ENCODE measurements at regions of chr2 and their contacts with region 1.

Region 1: DNA sequence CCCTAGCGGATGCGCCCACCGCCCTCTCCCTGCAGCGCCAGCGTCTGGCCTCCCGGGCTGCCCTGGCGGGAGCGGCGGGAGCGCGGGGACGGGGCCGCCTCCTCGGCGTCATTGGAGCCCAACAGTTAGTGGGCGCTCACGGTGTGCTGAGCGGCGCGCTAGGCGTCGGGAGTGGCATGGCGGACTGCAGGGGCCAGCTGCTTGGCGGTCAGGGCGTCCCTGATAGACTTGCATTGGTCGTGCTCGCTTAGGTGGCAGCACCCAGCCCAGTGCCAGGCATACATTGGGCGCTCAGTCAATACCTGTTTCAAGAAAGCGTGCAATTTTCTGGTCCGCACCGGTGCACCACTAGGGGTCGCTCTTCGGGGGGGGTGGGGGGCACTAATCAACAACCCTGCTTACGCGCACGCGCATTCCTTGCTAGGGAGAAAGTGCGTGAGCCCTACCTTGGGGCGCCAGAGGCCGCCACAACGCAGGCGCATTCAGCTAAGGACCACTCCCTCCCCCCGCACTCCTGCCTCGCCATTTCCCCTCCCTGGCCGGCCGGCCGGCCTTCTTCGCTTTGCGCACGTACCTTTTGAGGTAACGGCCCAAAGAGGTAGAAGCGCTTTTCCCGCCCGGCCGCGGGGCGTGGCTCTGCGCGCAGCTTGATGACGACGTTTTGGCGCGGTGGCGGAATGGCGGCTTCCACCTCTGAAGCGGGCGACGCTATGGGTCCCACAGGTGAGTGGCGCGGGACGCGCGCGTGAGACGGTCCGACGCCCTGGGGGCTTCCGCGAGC is 411 bp upstream of the MZT2A start:
- DNase-seq: peak in 1 of 2 donors; percentile 95
- H3K4me3 ChIP-seq: peak overlapping the region; percentile 73 to 83
- H3K27ac ChIP-seq: peak overlapping the region; percentile 90
- H3K4me1 ChIP-seq: peaks cover 38% of the 10 kb centered on the region
- H3K27me3 ChIP-seq: no peaks in the 10 kb centered on the region
- CTCF ChIP-seq: peak; percentile 35 to 95 (median 78)
- POLR2A ChIP-seq: no peak

Region 2: DNA sequence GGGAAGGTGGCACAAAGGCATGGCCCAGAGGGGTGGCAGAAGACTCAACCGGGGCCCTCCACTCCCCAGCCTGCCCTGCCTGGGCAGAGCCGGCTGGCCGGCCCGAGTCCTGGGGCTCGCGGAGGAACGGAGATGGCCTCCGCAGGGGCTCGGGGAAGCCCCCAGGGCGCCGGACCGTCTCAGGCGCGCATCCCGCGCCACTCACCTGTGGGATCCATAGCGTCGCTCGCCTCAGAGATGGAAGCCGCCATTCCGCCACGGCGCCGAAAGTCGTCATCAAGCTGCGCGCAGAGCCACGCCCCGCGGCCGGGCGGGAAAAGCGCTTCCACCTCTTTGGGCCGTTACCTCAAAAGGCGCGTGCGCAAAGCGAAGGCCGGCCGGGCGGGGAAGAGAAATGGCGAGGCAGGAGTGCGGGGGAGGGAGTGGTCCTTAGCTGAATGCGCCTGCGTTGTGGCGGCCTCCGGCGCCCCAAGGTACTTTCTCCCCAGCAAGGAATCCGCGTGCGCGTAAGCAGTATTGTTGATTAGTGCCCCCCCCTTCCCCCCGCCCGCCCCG is 1311.2 kb before region 1 on chr2 and contains the start of gene SMPD4:
- intact Hi-C with region 1: loop called (anchors 5 kb)
- DNase-seq: peak in 1 of 2 donors; percentile 96
- H3K4me3 ChIP-seq: peak within 1 kb of the TSS; percentile 88 to 98
- H3K27ac ChIP-seq: peak within 1 kb of the TSS; percentile 86
- H3K4me1 ChIP-seq: peaks cover 35% of the 10 kb centered on the region
- H3K27me3 ChIP-seq: no peaks in the 10 kb centered on the region
- CTCF ChIP-seq: no peak
- POLR2A ChIP-seq: peak in 1 of 2 donors; percentile 8
- total RNA-seq, gene SMPD4: 45.2 TPM

Region 3: DNA sequence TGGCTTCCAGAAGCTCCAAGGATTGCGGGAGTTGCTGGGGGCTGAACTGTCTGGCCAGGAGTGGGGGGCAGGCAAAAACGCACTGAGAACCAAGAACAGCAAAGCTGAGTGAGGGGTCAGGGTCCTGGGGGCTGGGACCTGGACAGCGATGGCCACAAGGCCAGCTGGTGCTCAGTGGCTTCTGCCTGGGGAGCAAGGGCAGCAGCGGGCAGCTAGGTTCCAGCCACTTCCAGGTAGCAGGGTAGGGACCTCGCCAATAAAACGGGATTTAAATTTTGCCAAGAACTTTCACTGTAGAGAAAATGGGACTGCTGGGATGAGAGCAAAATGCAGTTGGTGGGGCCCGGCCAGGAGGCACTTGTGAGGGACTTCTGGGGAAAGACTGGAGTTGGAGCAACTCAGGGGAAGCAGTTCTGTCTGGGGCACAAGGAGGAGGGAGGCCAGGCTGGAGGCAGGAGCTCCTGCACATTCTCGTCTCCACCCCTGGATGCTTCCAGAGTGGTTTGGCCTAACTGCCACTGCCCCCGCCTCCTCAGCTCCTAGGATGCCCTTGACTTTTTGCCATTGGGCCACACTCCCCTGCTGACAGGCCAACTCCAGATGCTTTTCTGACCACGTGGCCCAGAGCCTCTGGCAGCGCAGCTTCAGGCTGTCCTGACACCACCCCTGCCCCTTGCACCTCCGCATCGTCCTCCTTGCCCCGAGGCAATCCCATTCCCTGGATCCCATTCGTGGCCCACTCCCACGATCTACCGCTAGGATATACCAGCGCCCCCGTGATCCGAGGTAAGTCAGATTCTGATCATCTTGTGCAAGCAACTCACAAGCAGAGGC is 29.6 kb after region 1 on chr2:
- intact Hi-C with region 1: loop called (anchors 1 kb)
- DNase-seq: no peak
- H3K4me3 ChIP-seq: no peak overlapping the region
- H3K27ac ChIP-seq: no peak overlapping the region
- H3K4me1 ChIP-seq: no peaks in the 10 kb centered on the region
- H3K27me3 ChIP-seq: no peaks in the 10 kb centered on the region
- CTCF ChIP-seq: no peak
- POLR2A ChIP-seq: no peak

Region 4: GRCh38 chr2:131635611-131636010 is 143.0 kb after region 1 on chr2:
- intact Hi-C with region 1: no loop called
- DNase-seq: no peak
- H3K4me3 ChIP-seq: no peak overlapping the region
- H3K27ac ChIP-seq: no peak overlapping the region
- H3K4me1 ChIP-seq: no peaks in the 10 kb centered on the region
- H3K27me3 ChIP-seq: no peaks in the 10 kb centered on the region
- CTCF ChIP-seq: no peak
- POLR2A ChIP-seq: no peak

Measured in vagina (tissue), 2 donors.